H1 (cell line): ENCODE measurements at regions of chr3 and their contacts with region 1.

Region 1: DNA sequence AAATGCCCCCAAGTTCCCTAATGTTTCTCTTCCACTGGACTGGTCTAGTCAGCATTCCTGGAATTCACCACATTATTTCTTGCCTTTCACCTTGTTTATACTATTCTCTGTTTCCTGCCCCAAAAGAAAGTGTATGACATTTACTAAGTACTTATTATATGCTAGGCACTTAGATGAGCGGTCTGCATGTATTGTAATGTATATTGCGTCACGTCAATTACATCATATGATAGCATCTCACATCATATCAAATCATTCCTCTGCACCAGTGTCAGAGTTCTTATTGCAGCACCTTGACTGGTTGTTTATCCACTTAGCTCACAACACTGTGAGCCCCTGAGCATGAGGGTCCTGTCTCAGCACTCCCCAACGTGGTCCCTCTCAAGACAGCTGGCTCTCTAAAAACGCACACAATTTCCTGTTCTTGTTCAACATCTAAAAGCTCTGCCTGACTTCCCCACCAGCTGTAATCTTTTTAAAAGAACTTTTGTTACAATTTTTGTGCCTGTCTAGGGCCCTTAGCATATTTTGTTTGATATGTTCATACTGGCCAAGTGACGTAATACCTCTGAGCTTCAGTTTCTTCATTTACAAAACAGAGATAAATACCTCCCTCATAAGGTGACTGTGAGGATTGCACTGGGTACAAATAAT is 58.8 kb downstream of the ARHGAP31 start:
- DNase-seq: no peak
- H3K4me3 ChIP-seq: no peak overlapping the region
- H3K27ac ChIP-seq: no peak overlapping the region
- H3K4me1 ChIP-seq: peaks cover 11 to 32% (median 21%) of the 10 kb centered on the region in 4 experiments
- H3K27me3 ChIP-seq: no peaks in the 10 kb centered on the region
- CTCF ChIP-seq: peak in 2 of 3 experiments; percentile 16 to 43; a peak in 2 of 4 replicates
- EP300 ChIP-seq: no peak
- POLR2A ChIP-seq: no peak
- RAD21 ChIP-seq: peak; percentile 51 to 57

Region 2: GRCh38 chr3:118960876-118961450 is 392.0 kb before region 1 on chr3:
- CTCF ChIA-PET with region 1: no interaction called
- POLR2A ChIA-PET with region 1: no interaction called
- DNase-seq: no peak
- H3K4me3 ChIP-seq: no peak overlapping the region
- H3K27ac ChIP-seq: no peak overlapping the region
- H3K4me1 ChIP-seq: peaks cover 0 to 5% (median 0%) of the 10 kb centered on the region in 4 experiments; a peak in 1 of 7 replicates
- H3K27me3 ChIP-seq: no peaks in the 10 kb centered on the region
- CTCF ChIP-seq: no peak
- EP300 ChIP-seq: no peak
- POLR2A ChIP-seq: no peak
- RAD21 ChIP-seq: no peak

Region 3: GRCh38 chr3:119276680-119277079 is 76.3 kb before region 1 on chr3:
- CTCF ChIA-PET with region 1: interaction called, 25 read pairs
- POLR2A ChIA-PET with region 1: no interaction called
- DNase-seq: no peak
- H3K4me3 ChIP-seq: no peak overlapping the region
- H3K27ac ChIP-seq: no peak overlapping the region
- H3K4me1 ChIP-seq: peaks cover 0 to 6% (median 0%) of the 10 kb centered on the region in 4 experiments; a peak in 1 of 7 replicates
- H3K27me3 ChIP-seq: no peaks in the 10 kb centered on the region
- CTCF ChIP-seq: no peak
- EP300 ChIP-seq: no peak
- POLR2A ChIP-seq: no peak
- RAD21 ChIP-seq: no peak

Region 4: DNA sequence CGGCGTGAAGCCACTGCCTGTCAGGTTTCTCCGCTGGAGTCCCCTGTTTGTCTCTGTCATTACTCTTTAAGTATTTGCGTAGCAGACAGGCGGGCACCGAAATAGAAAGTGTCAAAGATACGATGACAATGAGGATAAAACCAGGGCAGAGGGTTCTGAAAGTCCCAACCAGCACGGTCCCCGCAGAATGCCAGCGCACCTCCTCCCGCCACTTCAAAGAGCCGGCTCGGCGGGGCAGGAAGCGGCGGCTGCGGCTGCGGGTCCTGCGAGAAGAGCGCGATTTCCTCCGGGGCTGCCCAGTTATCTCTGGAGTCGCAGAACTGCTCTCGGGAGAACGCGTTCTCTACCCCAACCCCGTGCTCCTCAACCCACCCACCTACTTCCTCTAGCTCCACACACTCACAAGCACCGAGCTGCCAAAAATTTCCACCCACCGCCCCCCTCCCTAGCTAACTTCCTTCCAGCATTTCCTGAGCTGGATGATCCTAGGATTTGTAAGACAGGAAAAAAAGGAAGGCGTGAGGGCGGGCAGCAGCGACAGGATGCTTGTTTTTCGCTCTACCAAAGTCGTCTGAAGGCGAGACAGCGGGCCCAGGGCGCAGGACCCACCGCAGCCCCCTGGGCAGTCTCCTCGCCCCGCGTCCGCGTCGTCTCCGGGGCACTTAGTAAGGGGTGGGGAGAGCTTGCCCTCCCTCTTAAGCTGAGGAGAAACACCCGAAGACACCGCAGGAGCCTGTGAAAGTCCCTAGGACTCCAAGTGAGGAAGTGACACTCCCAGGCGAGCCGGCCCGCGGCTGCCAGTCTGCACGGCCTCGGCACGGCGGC is 58.9 kb before region 1 on chr3 and contains the start of gene ARHGAP31:
- CTCF ChIA-PET with region 1: interaction called, 13 read pairs
- POLR2A ChIA-PET with region 1: interaction called, 9 read pairs
- DNase-seq: peak in 1 of 2 experiments; percentile 78
- H3K4me3 ChIP-seq: peak within 1 kb of the TSS; percentile 73 to 84 (median 80)
- H3K27ac ChIP-seq: no peak within 1 kb of the TSS
- H3K4me1 ChIP-seq: peaks cover 2 to 14% (median 9%) of the 10 kb centered on the region in 4 experiments
- H3K27me3 ChIP-seq: peaks cover 0 to 29% (median 13%) of the 10 kb centered on the region in 4 experiments; a peak in 4 of 7 replicates
- CTCF ChIP-seq: no peak
- EP300 ChIP-seq: no peak
- POLR2A ChIP-seq: no peak
- RAD21 ChIP-seq: no peak
- total RNA-seq, gene ARHGAP31: 4.9 and 7.6 TPM in 2 replicates

Region 5: DNA sequence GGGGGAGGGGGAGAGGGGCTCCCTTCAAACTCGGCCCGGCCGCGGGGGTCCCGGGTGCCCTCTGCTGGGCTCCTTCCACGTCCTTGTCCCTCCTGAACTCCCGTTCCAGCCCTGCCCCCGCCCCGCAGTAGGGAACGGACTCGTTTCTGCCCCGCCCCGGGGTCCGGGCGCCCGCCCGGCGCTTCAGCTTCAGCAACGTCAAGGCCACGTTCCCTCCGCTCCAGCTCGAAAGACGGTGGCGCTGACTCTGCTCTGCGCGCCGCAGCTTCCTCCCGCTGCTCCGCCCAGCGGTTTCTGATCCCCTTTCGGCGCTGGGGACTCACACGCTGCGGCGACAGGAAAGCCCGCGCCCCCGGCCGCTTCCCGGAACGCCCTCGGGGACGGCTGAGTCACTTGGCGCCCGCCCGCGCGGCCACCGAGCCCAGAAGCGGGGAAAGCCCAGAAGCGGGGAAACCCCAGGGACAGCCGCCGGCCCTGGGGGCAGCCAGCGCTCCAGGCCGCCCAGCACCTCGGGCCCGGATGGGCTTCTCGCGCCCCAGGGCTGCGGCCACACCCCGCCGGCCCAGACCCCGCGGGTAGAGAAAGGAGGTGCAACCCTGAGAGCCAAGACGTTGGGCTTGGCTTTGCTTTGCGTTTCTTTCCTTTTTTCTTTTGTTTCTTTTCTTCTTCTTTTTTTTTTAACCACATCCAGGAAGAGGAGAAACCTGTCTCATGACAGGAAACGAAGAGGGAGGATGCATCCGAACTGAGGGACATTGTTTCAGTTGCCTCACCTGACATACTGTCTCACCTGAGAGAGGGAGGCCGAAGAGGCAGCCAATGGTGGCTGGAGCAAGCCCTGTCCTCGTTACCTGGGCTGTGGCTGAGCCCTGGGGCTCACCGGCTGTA is 29.9 kb before region 1 on chr3:
- CTCF ChIA-PET with region 1: interaction called, 16 read pairs
- POLR2A ChIA-PET with region 1: interaction called, 12 read pairs
- DNase-seq: peak; percentile 59 to 70
- H3K4me3 ChIP-seq: peak overlapping the region; percentile 49 to 68 (median 66)
- H3K27ac ChIP-seq: peak overlapping the region; percentile 79
- H3K4me1 ChIP-seq: peaks cover 1 to 12% (median 10%) of the 10 kb centered on the region in 4 experiments; a peak in 5 of 7 replicates
- H3K27me3 ChIP-seq: no peaks in the 10 kb centered on the region
- CTCF ChIP-seq: peak in 1 of 3 experiments; percentile 17; a peak in 1 of 4 replicates
- EP300 ChIP-seq: no peak
- POLR2A ChIP-seq: peak; percentile 1 to 52; a peak in 2 of 3 replicates
- RAD21 ChIP-seq: peak in 1 of 2 experiments; percentile 17; a peak in 2 of 4 replicates